A549 (cell line): ENCODE measurements at regions of chr22 and their contacts with region 1.

Region 1: GRCh38 chr22:41240377-41241132 is at the start of gene CHADL:
- DNase-seq: no peak
- ATAC-seq: peak; percentile 7 to 20; a peak in 3 of 6 replicates
- H3K4me3 ChIP-seq: no peak within 1 kb of the TSS
- H3K27ac ChIP-seq: no peak within 1 kb of the TSS
- H3K4me1 ChIP-seq: no peaks in the 10 kb centered on the region
- CTCF ChIP-seq: no peak
- EP300 ChIP-seq: no peak
- POLR2A ChIP-seq: no peak
- RAD21 ChIP-seq: no peak
- polyA plus RNA-seq, gene CHADL: not detected in 2 replicates

Region 2: DNA sequence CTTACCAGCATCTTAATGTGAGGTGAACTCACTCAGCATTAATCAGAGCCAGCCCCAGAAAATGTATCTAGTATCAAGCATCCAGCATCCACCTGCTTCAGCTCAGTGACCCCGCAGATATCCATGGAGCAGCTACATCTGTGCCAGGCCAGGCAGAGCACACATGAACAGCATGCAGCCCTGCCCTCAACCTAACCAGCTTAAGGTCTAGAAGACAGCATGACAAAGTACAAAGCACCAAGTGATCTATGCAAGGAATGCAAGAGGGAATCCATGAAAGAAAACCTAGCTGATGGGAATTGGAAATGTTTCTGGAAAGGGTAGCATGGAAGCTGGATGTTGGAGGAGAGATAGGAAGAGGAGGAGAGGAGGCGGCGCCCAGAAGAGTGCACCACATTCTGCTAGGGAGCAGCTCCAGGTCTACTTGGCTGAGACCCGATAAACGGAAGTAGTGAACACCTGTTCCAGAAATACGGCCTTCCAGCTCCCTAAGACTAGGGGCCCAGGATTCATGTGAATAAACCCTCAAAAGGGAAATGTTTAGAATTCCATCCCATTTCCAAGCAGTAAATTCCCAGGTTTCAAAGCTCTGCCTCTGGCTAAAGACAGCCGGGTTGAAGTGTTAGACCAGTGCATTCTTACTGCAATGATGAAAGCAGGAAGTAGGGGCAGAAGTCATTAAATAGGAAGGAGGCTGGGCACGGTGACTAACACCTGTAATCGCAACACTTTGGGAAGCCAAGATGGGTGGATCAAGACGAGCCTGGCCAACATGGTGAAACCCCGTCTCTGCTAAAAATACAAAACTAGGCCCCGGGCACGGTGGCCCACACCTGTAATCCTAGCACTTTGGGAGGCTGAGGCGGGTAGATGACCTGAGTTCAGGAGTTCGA is 59.0 kb before region 1 on chr22:
- CTCF ChIA-PET with region 1: no interaction called
- POLR2A ChIA-PET with region 1: interaction called, 11 read pairs
- DNase-seq: no peak
- ATAC-seq: peak in 1 of 2 experiments; percentile 26; a peak in 1 of 6 replicates
- H3K4me3 ChIP-seq: no peak overlapping the region
- H3K27ac ChIP-seq: no peak overlapping the region
- H3K4me1 ChIP-seq: no peaks in the 10 kb centered on the region
- CTCF ChIP-seq: no peak
- EP300 ChIP-seq: no peak
- POLR2A ChIP-seq: no peak
- RAD21 ChIP-seq: no peak